Adrenal gland (tissue), 19 donors: ENCODE measurements at regions of chr1 and their contacts with region 1.

Region 1: DNA sequence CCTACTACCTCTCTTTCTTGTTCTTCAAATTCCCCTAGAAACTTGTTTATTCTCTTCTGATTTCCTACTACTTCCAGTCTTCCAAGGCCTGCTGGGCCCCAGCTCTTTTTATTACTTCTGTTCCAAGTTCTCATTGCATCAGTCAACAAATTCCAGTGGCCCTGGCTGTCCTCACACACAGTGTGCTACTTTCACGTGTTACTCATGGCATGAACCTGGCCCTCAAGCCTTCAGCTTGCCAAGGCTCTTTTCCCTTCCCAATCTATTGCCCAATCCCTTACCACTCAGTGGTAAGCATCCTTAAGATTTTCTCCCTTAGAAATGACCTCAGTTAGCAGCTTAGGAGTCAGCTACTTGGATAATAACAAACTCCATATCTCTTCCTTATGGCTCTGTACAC is 613.5 kb downstream of the LMO4 start:
- DNase-seq: no peak
- H3K4me3 ChIP-seq: no peak overlapping the region
- H3K27ac ChIP-seq: no peak overlapping the region
- H3K4me1 ChIP-seq: no peaks in the 10 kb centered on the region
- H3K27me3 ChIP-seq: no peaks in the 10 kb centered on the region
- CTCF ChIP-seq: no peak
- POLR2A ChIP-seq: no peak

Region 2: DNA sequence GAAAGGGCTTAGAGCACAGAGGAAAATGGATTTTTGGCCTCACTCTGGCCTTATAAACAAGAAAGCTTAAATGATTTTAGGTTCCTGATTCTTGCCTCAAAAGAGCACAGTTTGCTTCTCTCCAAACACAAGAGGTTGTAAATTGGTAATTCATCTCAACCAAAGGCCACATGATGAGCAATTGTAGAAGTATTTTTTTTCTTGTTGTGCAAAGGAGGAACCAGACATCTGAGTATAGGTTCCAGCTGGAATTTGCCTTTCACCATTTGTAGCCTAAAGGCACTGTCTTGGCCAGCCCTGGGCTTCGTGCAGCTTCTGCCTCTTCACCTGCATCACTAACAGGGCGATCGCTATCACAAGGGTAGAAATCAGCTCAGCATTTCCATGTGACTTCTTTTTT is 792.5 kb before region 1 on chr1:
- intact Hi-C with region 1: loop called in 1 of 2 experiments (anchors 10 kb)
- DNase-seq: no peak
- H3K4me3 ChIP-seq: no peak overlapping the region
- H3K27ac ChIP-seq: peak overlapping the region in 1 of 5 donors; percentile 12
- H3K4me1 ChIP-seq: peaks cover 0 to 9% of the 10 kb centered on the region in 2 donors
- H3K27me3 ChIP-seq: no peaks in the 10 kb centered on the region
- CTCF ChIP-seq: no peak
- POLR2A ChIP-seq: no peak

Region 3: GRCh38 chr1:87902830-87903229 is 39.3 kb before region 1 on chr1:
- intact Hi-C with region 1: no loop called
- DNase-seq: peak in 2 of 7 donors; percentile 1 to 14
- H3K4me3 ChIP-seq: no peak overlapping the region
- H3K27ac ChIP-seq: no peak overlapping the region
- H3K4me1 ChIP-seq: no peaks in the 10 kb centered on the region
- H3K27me3 ChIP-seq: no peaks in the 10 kb centered on the region
- CTCF ChIP-seq: no peak
- POLR2A ChIP-seq: no peak

Region 4: GRCh38 chr1:88001460-88001859 is 59.3 kb after region 1 on chr1:
- intact Hi-C with region 1: no loop called
- DNase-seq: no peak
- H3K4me3 ChIP-seq: no peak overlapping the region
- H3K27ac ChIP-seq: no peak overlapping the region
- H3K4me1 ChIP-seq: no peaks in the 10 kb centered on the region
- H3K27me3 ChIP-seq: no peaks in the 10 kb centered on the region
- CTCF ChIP-seq: no peak
- POLR2A ChIP-seq: no peak

Region 5: GRCh38 chr1:88134983-88135921 is 193.1 kb after region 1 on chr1:
- intact Hi-C with region 1: no loop called
- DNase-seq: no peak
- H3K4me3 ChIP-seq: no peak overlapping the region
- H3K27ac ChIP-seq: no peak overlapping the region
- H3K4me1 ChIP-seq: no peaks in the 10 kb centered on the region
- H3K27me3 ChIP-seq: no peaks in the 10 kb centered on the region
- CTCF ChIP-seq: no peak
- POLR2A ChIP-seq: no peak